ENCODE measurements at regions of chr11 and their contacts with region 1.

Region 1: DNA sequence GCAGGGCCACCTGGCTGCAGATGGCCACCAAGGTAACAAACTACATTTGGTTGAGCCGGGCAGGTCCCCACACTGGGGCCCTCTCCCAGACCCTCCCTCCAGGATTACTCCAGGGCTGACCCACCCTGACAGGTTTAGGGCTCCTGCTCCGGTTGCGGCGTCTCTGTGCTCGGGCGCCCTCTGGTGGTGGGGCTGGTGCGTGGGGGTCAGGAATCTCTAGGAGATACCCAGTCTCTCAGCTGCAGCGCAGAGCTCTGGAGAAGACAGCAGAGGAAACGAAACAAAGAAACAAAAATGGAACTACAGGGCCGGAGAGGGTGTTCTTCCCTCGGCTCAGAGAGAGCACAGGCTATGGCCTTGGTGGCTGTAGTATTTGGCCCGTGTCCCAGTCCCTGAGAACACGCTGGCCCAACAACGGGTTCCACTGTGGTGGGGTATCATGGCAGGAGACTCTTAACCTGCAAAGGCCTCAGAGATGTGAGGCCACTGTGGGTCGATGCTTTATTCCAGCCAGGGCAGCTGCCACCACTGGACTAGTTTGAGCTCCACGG is 2.4 kb downstream of the C11orf96 start:
- DNase-seq: peak; percentile 66 to 84
- H3K4me3 ChIP-seq: no peak overlapping the region
- H3K4me3 Mint-ChIP-seq: peak overlapping the region; percentile 81
- H3K27ac Mint-ChIP-seq: no peak overlapping the region
- H3K4me1 ChIP-seq: peaks cover 8% of the 10 kb centered on the region
- H3K4me1 Mint-ChIP-seq: peaks cover 12% of the 10 kb centered on the region
- H3K27me3 ChIP-seq: peaks cover 11% of the 10 kb centered on the region
- H3K27me3 Mint-ChIP-seq: peaks cover 24% of the 10 kb centered on the region
- CTCF ChIP-seq: peak; percentile 87

Region 2: DNA sequence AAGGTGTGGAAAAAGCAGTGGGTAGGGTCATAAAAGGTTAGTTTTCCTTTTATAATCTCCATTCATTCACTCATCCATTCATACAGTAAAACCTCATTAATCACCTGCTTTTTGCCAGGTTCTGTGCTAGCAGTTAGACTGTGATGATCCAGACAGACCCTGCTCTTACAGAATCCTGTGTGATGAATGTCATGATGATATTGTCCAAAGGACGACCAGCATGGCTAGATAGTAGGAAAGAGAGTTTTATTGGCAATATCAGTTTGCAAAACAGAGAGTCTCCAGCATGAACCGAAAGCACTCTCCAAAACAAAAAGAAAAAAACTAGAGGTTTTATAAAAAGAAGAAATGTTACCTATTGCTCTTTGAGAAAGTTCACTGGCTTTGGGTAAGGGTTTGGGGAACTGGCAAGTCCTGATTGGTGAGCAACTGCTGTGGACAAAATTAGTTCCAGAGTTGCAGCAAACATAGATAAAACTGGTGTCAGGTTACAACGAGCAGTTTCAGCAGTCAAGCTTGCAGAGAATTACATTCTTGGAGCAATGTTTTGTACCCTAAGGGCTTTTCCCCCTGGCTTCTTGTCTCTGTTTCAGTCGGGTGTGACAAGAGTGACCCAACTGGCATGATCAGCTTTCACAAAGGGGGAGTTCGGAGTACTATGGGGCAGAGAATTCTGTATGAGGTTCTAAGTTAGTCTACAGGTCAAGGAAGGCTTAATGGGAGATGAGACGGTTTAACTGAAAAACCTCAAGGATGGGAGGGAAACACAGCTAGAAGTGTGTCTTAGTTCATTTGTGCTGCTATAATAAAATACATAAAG is 206.0 kb before region 1 on chr11:
- CTCF ChIA-PET with region 1: no interaction called
- POLR2A ChIA-PET with region 1: no interaction called
- intact Hi-C with region 1: no loop called
- DNase-seq: peak; percentile 79
- H3K4me3 ChIP-seq: no peak overlapping the region
- H3K4me3 Mint-ChIP-seq: peak overlapping the region; percentile 38
- H3K27ac Mint-ChIP-seq: peak overlapping the region; percentile 79
- H3K4me1 ChIP-seq: peaks cover 44% of the 10 kb centered on the region
- H3K4me1 Mint-ChIP-seq: peaks cover 50% of the 10 kb centered on the region
- H3K27me3 ChIP-seq: no peaks in the 10 kb centered on the region
- H3K27me3 Mint-ChIP-seq: no peaks in the 10 kb centered on the region
- CTCF ChIP-seq: no peak

Region 3: DNA sequence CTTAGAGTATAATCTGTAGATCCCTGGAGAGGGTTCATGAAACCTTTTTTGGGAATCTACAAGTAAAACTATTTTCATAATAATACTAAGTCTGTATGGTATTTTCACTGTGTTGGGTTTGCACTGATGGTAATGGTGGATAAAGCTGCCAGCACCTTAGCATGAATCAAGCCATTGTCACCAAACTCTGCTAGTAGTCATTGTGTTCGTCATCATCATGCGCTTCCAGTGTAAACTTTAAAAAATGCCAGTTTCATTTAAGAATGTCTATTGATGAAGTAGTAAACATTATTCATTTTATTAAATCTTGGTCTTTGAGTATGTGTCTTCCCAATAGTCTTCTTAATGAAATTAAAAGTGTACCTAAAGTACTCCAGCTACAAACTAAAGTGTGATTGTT is 49.2 kb before region 1 on chr11:
- CTCF ChIA-PET with region 1: interaction called, 4 read pairs
- POLR2A ChIA-PET with region 1: no interaction called
- intact Hi-C with region 1: loop called (anchors 1 kb)
- DNase-seq: no peak
- H3K4me3 ChIP-seq: no peak overlapping the region
- H3K4me3 Mint-ChIP-seq: no peak overlapping the region
- H3K27ac Mint-ChIP-seq: no peak overlapping the region
- H3K4me1 ChIP-seq: no peaks in the 10 kb centered on the region
- H3K4me1 Mint-ChIP-seq: no peaks in the 10 kb centered on the region
- H3K27me3 ChIP-seq: no peaks in the 10 kb centered on the region
- H3K27me3 Mint-ChIP-seq: no peaks in the 10 kb centered on the region
- CTCF ChIP-seq: no peak

Measured in Caco-2 (cell line).